ENCODE measurements at regions of chr11 and their contacts with region 1.

Region 1: DNA sequence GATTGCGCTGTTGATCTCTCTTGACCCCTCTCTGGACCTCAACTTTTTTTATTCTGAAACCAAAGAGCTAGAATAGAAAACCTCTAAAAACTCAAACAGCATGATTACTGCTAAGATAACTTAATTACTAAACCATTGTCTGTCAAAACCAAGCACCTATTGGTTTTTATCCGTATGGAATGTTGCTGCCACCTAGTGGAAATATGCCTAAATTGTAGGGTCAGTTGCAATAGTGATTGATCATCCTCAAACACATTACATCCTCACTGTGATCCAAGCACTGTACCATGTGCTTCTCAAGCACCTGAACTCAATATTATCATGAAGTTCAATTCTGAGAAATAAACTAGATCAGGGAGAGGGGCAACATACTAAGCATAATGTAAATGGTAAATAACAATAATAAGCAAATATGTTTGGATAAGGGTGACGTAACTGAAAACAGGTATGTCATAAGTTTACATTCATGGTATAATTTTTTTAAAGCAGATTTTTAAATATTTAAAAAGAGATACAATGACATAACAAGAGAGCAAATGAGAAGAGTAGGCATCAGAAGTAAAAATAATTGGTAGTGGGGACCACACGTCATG is 3.8 kb upstream of the OR5A2 start:
- DNase-seq: peak in 1 of 3 donors; percentile 48
- ATAC-seq: peak; percentile 90 to 97 (median 92)
- H3K4me3 ChIP-seq: no peak overlapping the region
- H3K27ac ChIP-seq: no peak overlapping the region
- H3K4me1 ChIP-seq: no peaks in the 10 kb centered on the region
- H3K27me3 ChIP-seq: no peaks in the 10 kb centered on the region
- CTCF ChIP-seq: peak; percentile 86 to 92 (median 89)
- POLR2A ChIP-seq: no peak

Region 2: DNA sequence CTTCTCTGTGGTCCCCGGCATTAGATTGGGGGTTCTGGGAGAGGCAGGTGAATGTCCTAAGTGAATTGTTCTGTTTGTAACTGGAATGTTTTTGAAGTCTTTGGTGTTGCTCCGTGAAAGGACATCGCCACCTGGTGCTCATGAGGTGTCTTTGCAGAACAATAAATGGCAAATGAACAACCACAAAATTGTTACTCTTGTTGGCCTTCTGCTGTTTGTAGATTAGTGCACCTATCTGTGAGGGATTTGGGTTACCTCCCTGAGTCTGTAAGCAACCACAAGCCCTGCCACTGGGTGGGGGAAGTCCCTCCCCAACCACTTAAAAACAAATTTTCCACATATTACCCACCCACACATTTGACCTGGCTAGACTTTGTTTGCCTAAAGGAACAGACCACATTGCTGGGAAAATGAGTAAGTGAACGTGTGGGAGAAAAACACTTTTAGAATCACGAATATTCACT is 222.0 kb before region 1 on chr11:
- intact Hi-C with region 1: no loop called
- DNase-seq: peak in 1 of 3 donors; percentile 46
- ATAC-seq: peak; percentile 70 to 77 (median 72)
- H3K4me3 ChIP-seq: no peak overlapping the region
- H3K27ac ChIP-seq: peak overlapping the region in 1 of 3 donors; percentile 39
- H3K4me1 ChIP-seq: peaks cover 0 to 8% (median 0%) of the 10 kb centered on the region in 4 donors
- H3K27me3 ChIP-seq: no peaks in the 10 kb centered on the region
- CTCF ChIP-seq: peak; percentile 70 to 87 (median 75)
- POLR2A ChIP-seq: no peak

Region 3: DNA sequence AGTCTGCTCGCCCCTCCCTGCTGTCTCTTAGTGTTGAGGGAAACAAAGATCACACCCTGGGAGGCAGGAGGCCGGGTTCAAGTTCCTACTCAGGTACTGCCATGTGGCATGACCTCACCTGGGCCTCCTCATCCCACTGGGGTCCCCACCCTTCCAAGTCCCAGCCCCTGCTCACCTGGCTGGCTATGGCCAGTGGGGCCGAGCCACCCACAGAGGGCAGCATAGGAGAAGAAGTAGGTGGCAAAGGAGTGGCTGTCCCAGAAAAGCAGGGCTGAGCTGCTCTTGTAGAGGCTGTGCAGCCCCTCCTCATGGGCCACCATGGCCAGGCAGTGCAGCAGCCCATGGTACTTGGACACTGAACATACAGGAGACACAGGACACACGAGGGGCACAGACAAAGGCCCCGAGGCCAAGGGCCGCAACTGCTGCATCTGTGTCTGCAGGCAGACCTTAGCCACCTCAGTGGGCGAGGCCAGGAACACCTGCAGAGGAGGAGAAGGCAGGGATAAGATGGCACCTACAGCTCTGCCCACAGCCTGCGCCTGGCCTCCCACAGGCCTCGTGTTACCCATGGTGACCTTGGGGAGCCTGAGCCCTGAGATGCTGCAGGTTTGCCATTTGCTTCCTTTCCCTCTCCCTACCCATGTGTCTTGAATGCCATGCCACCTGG is 166.7 kb before region 1 on chr11:
- intact Hi-C with region 1: loop called in 1 of 2 experiments (anchors 5 kb)
- DNase-seq: peak; percentile 66 to 72 (median 67)
- ATAC-seq: peak; percentile 74 to 87 (median 82)
- H3K4me3 ChIP-seq: no peak overlapping the region
- H3K27ac ChIP-seq: no peak overlapping the region
- H3K4me1 ChIP-seq: no peaks in the 10 kb centered on the region
- H3K27me3 ChIP-seq: no peaks in the 10 kb centered on the region
- CTCF ChIP-seq: peak; percentile 54 to 73 (median 65)
- POLR2A ChIP-seq: no peak

Region 4: DNA sequence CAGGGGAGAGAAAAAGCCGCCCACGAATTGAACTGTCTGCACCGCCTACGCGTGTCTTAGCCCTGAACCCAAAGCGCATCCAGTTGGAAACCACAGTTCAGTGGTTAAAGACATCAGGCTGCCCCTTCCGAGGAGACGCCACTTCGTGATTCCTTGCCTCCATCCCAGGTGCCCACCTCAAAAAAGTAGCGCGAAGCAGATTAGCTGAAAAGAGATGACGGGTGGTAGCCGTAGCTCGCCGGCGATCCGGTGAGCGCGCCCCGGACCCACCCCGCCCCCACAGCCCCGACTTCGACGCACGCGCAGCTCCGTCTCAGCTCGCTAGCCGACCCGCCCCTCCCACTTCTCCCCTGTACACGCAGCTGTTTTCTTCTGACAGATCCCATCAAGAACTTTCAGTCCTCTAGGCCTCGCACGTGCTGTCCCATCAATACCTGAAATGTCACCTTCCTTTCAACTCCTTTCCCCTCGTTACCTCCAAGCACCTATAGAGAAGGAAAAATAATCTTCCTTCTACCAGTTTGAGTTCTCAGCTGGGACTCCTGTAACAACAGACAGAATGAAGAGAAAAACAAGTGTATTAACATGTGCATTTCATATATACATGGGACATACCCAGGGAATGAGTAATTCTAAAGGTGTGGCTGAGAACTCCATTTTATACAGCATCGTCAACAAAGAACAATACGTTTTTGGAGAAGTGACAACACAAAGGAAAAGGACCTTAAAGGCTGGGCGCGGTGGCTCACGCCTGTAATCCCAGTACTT is 130.9 kb after region 1 on chr11:
- intact Hi-C with region 1: no loop called
- DNase-seq: peak; percentile 70 to 84 (median 81)
- ATAC-seq: peak; percentile 81 to 87 (median 84)
- H3K4me3 ChIP-seq: peak overlapping the region; percentile 67 to 77 (median 75)
- H3K27ac ChIP-seq: peak overlapping the region; percentile 42 to 55 (median 53)
- H3K4me1 ChIP-seq: peaks cover 0 to 4% (median 0%) of the 10 kb centered on the region in 4 donors
- H3K27me3 ChIP-seq: no peaks in the 10 kb centered on the region
- CTCF ChIP-seq: no peak
- POLR2A ChIP-seq: no peak

Measured in right lobe of liver (tissue), 6 donors.